ENCODE measurements at regions of chr2 and their contacts with region 1.

Region 1: GRCh38 chr2:29650631-29651097 is 270.7 kb downstream of the ALK start:
- DNase-seq: peak; percentile 74
- H3K4me3 ChIP-seq: no peak overlapping the region
- H3K27ac ChIP-seq: peak overlapping the region in 1 of 2 experiments; percentile 99; a peak in 2 of 4 replicates
- H3K4me1 ChIP-seq: peaks cover 0 to 41% of the 10 kb centered on the region in 2 experiments; a peak in 2 of 4 replicates
- H3K27me3 ChIP-seq: no peaks in the 10 kb centered on the region
- CTCF ChIP-seq: no peak
- EP300 ChIP-seq: peak; percentile 59 to 100; a peak in 2 of 4 replicates
- RAD21 ChIP-seq: peak; percentile 49

Region 2: GRCh38 chr2:29611850-29612249 is 38.8 kb before region 1 on chr2:
- CTCF ChIA-PET with region 1: interaction called, 15 read pairs
- POLR2A ChIA-PET with region 1: interaction called, 41 read pairs
- DNase-seq: no peak
- H3K4me3 ChIP-seq: no peak overlapping the region
- H3K27ac ChIP-seq: peak overlapping the region in 1 of 2 experiments; percentile 99; a peak in 2 of 4 replicates
- H3K4me1 ChIP-seq: peaks cover 0 to 80% of the 10 kb centered on the region in 2 experiments; a peak in 2 of 4 replicates
- H3K27me3 ChIP-seq: no peaks in the 10 kb centered on the region
- CTCF ChIP-seq: no peak
- EP300 ChIP-seq: no peak
- RAD21 ChIP-seq: no peak